ENCODE measurements at regions of chr20 and their contacts with region 1.

Region 1: DNA sequence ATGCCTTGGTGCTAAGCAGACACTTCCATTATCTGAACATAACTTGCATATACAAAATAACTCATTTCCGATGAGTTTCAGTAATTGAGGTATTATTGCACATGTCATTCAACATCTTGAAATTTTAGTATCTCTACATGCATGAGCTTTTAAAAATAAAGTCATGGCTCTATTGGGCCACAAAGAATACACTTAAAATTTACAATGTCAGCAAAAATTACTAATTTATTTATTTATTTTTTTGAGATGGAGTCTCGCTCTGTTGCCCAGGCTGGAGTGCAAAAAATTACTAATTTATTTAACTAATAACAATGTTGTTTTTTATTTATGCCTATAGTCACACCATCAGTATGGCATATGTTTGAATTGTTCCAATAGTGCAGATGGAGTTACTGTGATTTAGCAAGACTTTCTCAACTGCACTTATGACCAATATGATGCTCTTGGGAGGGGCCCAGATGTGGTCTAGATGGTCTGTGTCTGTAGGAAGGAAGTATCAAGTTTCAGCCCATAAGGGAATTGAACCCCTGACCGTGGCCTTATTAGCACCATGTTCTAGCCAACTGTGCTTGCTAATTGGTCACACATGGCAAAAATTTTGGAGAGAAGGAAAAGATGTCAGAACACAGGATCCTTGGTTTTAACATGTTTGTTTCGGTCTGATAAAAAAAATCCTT is 370.7 kb upstream of the TSHZ2 start:
- DNase-seq: no peak
- ATAC-seq: no peak
- H3K4me3 ChIP-seq: no peak overlapping the region
- H3K27ac ChIP-seq: no peak overlapping the region
- H3K4me1 ChIP-seq: no peaks in the 10 kb centered on the region
- H3K27me3 ChIP-seq: no peaks in the 10 kb centered on the region
- CTCF ChIP-seq: no peak
- POLR2A ChIP-seq: no peak
- RAD21 ChIP-seq: no peak

Region 2: GRCh38 chr20:52668626-52669025 is 67.2 kb after region 1 on chr20:
- CTCF ChIA-PET with region 1: no interaction called
- POLR2A ChIA-PET with region 1: no interaction called
- RAD21 ChIA-PET with region 1: no interaction called
- intact Hi-C with region 1: loop called (anchors 10 kb)
- DNase-seq: no peak
- ATAC-seq: no peak
- H3K4me3 ChIP-seq: no peak overlapping the region
- H3K27ac ChIP-seq: no peak overlapping the region
- H3K4me1 ChIP-seq: no peaks in the 10 kb centered on the region
- H3K27me3 ChIP-seq: no peaks in the 10 kb centered on the region
- CTCF ChIP-seq: no peak
- POLR2A ChIP-seq: no peak
- RAD21 ChIP-seq: no peak

Measured in HCT116 (cell line).